ENCODE measurements at regions of chr2 and their contacts with region 1.

Region 1: DNA sequence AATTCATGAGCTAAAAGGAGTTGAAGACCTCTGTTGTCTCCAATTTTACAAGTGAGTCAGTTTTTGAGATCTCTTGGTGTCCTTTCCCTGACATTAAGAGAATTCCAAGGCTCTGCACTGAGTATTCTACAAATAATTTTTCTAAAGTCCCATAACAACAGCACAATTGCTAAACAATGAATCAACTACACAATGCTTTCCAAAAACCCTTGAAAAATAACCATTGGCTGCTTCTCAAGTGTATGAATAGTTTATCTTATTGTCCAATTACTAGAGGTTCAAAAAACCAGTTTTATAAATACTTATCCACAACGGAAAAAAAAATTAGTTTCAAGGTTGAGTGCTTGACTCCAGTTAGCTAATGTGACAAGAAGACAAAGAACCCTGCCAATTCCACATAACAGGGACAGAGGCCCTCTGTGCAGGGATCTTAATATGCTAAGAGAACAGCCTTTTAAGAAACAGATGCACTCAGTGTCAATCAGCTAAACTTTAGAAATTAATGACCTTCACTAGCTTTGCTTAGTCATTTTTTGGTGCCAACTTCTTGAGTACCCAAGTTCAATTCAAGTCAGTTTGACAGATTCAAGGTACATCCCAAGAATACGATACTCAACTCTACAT is 266.6 kb upstream of the CYP26B1 start:
- DNase-seq: no peak
- ATAC-seq: no peak
- H3K4me3 ChIP-seq: no peak overlapping the region
- H3K27ac ChIP-seq: no peak overlapping the region
- H3K4me1 ChIP-seq: no peaks in the 10 kb centered on the region
- H3K27me3 ChIP-seq: no peaks in the 10 kb centered on the region
- CTCF ChIP-seq: no peak

Region 2: DNA sequence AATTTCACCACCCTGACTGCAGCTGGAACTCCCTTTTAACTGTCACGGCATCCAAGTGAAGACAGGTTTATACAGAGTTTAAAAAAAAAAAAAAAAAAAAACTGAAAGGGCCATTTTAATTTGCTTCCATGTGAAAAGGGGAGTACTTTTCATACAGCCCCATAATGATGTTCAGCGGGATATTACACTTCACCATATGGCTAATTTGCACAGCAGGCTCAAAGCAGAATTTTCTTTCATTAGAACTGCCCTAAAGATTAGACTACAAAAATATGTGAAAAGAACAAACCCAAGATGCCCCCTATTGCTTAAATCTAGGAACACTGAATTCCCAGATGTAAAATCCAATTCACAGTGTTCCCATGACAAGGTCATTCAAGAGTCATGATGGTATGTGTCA is 109.8 kb after region 1 on chr2:
- intact Hi-C with region 1: loop called in 1 of 2 experiments (anchors 5 kb)
- DNase-seq: no peak
- ATAC-seq: no peak
- H3K4me3 ChIP-seq: no peak overlapping the region
- H3K27ac ChIP-seq: no peak overlapping the region
- H3K4me1 ChIP-seq: no peaks in the 10 kb centered on the region
- H3K27me3 ChIP-seq: no peaks in the 10 kb centered on the region
- CTCF ChIP-seq: no peak

Measured in psoas muscle (tissue), 8 donors.